ENCODE measurements at regions of chr12 and their contacts with region 1.

Region 1: GRCh38 chr12:52870351-52871290 is 21.8 kb upstream of the KRT78 start:
- DNase-seq: peak; percentile 83
- H3K4me3 Mint-ChIP-seq: no peak overlapping the region
- H3K27ac Mint-ChIP-seq: no peak overlapping the region
- H3K4me1 Mint-ChIP-seq: peaks cover 36% of the 10 kb centered on the region
- H3K27me3 Mint-ChIP-seq: peaks cover 44% of the 10 kb centered on the region

Region 2: DNA sequence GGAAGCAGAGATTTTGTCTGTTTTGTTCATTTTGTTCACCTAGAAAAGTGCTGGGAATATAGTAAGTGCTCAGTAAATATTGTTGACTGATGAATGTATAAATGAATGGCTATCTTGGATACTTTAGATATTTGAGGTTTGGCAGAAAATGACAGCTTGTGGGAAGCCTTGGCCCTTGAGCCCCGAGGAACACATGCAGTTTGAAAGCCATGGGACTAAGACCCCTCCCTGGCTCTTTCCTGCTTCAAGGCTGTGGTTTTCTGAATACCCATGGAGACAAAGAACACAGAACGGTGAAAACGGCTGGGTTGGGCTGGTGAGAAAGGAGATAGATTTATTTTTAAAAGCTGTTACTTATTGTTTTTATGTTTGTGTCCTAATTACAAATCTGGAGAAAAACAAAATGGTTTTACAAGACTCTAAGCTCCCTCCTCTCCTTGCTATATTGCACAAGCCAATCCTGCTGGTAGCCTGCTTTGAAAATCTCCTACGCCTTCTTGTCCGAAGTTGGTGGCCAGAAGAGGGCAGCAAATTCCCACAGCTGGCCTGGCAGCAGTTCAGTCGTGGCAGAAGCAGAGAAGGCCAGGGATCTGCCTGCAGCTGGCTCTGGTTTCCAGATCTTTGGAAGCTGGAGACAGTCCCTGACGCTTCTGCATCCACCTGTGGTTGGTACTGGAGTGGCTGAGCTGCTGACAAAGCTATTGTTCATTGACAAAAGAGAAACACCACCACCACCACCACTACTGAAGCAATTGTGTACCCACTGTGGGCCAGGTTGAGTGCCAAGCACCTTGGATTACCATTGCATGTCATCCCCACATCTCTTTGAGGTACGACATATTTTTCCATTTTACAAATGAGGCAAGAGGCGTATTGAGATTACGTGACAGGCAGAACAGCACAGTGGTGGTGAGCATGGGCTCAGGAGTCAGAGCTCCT is 498.1 kb before region 1 on chr12:
- CTCF ChIA-PET with region 1: interaction called, 13 read pairs
- DNase-seq: peak; percentile 77
- H3K4me3 Mint-ChIP-seq: no peak overlapping the region
- H3K27ac Mint-ChIP-seq: no peak overlapping the region
- H3K4me1 Mint-ChIP-seq: no peaks in the 10 kb centered on the region
- H3K27me3 Mint-ChIP-seq: peaks cover 56% of the 10 kb centered on the region

Region 3: DNA sequence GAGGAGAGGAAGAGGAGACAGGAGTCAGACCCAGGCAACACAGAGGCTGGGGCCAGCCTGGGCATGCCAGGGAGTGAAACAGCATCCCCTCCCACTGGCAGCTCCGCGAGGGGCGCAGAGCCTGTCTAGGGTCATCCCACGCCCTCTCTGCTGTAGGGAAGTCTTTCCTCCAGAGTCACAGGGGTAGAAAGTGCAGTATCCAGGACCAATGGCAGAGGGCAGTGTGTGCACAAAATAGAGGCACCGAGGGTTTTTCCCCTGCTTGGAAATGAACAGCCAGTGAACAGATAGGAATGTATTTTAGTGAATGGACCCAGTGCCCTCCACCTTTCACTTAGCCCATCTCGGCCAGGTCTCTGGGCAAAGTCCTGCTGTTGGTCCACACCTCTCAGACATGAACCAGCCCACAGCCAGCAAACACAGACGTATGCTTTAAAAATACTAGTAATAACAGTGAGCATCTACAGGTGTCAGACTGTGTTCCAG is 287.6 kb before region 1 on chr12:
- CTCF ChIA-PET with region 1: interaction called, 244 read pairs
- DNase-seq: peak; percentile 81
- H3K4me3 Mint-ChIP-seq: no peak overlapping the region
- H3K27ac Mint-ChIP-seq: no peak overlapping the region
- H3K4me1 Mint-ChIP-seq: peaks cover 42% of the 10 kb centered on the region
- H3K27me3 Mint-ChIP-seq: peaks cover 34% of the 10 kb centered on the region